ENCODE measurements at regions of chr1 and their contacts with region 1.

Region 1: DNA sequence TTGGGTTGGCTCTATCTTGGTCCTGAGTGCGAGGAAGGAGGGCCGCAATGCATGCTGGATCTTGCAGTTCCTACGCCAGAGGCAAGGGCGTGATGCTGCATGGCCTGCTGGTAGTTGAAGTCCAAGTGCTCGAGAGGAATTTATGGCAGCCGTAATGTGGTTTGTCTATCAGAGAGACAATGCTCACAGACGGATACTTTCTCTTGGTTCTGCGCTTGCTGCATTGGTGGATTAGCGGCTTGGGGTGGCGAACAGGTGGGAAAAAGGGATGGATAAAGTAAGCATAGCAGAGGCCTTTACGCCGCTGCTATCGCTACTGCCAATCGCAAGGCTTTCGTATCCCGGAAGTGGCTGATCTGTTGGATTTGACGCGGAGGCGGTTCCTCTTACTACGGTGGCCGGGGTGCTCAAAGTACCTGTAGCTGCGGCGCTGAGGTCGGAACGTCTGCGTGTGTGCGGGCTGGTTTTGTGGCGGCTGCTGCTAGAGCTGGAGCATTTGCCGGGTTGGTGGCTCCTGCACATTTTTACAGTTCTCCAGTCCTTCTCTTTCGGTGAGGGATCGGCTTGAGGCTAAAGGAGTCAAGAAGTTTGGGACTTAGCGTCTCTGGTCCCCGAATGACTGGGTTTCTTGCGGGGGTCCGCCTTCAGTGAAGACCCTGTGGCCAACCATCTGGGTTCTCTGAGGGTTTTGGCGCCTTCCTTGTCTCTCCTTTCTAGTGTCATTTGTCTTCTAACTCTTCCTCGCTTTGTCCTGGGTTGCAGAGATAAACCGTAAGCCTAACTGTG is at the start of gene ATG4C:
- DNase-seq: peak; percentile 97
- H3K4me3 Mint-ChIP-seq: no peak within 1 kb of the TSS
- H3K27ac Mint-ChIP-seq: no peak within 1 kb of the TSS
- H3K4me1 Mint-ChIP-seq: peaks cover 6% of the 10 kb centered on the region
- H3K27me3 Mint-ChIP-seq: peaks cover 9% of the 10 kb centered on the region
- total RNA-seq, gene ATG4C: 8.9 and 10.2 TPM in 2 replicates

Region 2: GRCh38 chr1:62687903-62688686 is 95.8 kb before region 1 on chr1 and contains the start of gene DOCK7:
- intact Hi-C with region 1: loop called (anchors 5 kb)
- DNase-seq: peak; percentile 88
- H3K4me3 Mint-ChIP-seq: peak within 1 kb of the TSS; percentile 91
- H3K27ac Mint-ChIP-seq: peak within 1 kb of the TSS; percentile 85
- H3K4me1 Mint-ChIP-seq: peaks cover 21% of the 10 kb centered on the region
- H3K27me3 Mint-ChIP-seq: peaks cover 3% of the 10 kb centered on the region
- total RNA-seq, gene DOCK7: 17.8 and 18.0 TPM in 2 replicates

Region 3: DNA sequence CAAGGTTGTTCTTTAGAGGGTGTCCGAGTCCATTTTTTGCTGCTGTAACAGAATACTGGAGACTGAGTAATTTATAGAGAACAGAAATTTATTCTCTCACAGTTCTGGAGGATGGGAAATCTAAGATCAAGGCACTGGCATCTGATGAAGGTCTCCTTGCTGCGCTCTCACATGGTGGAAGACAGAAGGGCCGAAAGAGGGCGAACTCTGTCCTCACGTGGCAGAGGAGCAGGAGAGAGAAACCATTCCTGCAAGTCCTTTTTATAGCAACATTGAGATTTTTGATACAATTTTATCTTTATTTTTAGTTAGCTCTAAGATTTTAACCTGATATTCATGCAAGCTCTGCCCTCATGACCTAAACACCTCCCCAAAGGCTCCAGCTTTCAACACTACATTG is 48.4 kb after region 1 on chr1:
- intact Hi-C with region 1: no loop called
- DNase-seq: no peak
- H3K4me3 Mint-ChIP-seq: no peak overlapping the region
- H3K27ac Mint-ChIP-seq: no peak overlapping the region
- H3K4me1 Mint-ChIP-seq: peaks cover 1% of the 10 kb centered on the region
- H3K27me3 Mint-ChIP-seq: no peaks in the 10 kb centered on the region

Region 4: GRCh38 chr1:63367215-63368103 is 583.5 kb after region 1 on chr1 and contains the start of gene ALG6:
- intact Hi-C with region 1: loop called (anchors 1 kb)
- DNase-seq: peak; percentile 99
- H3K4me3 Mint-ChIP-seq: peak within 1 kb of the TSS; percentile 99
- H3K27ac Mint-ChIP-seq: peak within 1 kb of the TSS; percentile 93
- H3K4me1 Mint-ChIP-seq: peaks cover 15% of the 10 kb centered on the region
- H3K27me3 Mint-ChIP-seq: peaks cover 14% of the 10 kb centered on the region
- total RNA-seq, gene ALG6: 24.5 and 27.7 TPM in 2 replicates

Region 5: GRCh38 chr1:63522891-63523728 is 739.2 kb after region 1 on chr1 and contains the starts of genes EFCAB7 and ITGB3BP:
- intact Hi-C with region 1: loop called (anchors 5 kb)
- DNase-seq: peak; percentile 96
- H3K4me3 Mint-ChIP-seq: peak within 1 kb of the TSS; percentile 87
- H3K27ac Mint-ChIP-seq: peak within 1 kb of the TSS; percentile 98
- H3K4me1 Mint-ChIP-seq: peaks cover 29% of the 10 kb centered on the region
- H3K27me3 Mint-ChIP-seq: no peaks in the 10 kb centered on the region
- total RNA-seq, gene EFCAB7: 6.6 and 7.8 TPM in 2 replicates
- total RNA-seq, gene ITGB3BP: 51.1 and 53.4 TPM in 2 replicates